Sciatic nerve (tissue), 2 donors: ENCODE measurements at regions of chr2 and their contacts with region 1.

Region 1: GRCh38 chr2:228102949-228103348 is 78.5 kb downstream of the SPHKAP start:
- DNase-seq: no peak
- ATAC-seq: no peak

Region 2: GRCh38 chr2:226548732-226549131 is 1554.2 kb before region 1 on chr2:
- intact Hi-C with region 1: loop called (anchors 10 kb)
- DNase-seq: no peak
- ATAC-seq: no peak

Region 3: DNA sequence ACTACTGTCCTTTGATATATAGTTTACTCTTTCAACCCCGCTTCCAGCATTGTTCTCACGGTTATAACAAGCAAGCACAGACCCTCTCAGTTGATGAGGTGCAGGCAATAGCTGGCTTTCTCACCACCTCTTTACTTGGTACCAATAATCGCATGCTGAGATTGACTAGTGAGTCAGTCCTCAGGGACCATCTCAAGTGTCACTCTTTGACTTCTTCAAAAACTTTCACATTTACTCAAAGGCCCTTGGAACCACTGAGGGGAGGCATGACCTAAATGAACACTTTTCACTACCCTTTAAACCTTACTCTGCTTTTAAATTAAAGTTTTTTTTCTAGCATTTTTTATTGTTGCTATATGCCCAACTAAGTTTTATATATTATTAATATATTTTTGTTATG is 129.7 kb before region 1 on chr2:
- intact Hi-C with region 1: no loop called
- DNase-seq: no peak
- ATAC-seq: no peak

Region 4: DNA sequence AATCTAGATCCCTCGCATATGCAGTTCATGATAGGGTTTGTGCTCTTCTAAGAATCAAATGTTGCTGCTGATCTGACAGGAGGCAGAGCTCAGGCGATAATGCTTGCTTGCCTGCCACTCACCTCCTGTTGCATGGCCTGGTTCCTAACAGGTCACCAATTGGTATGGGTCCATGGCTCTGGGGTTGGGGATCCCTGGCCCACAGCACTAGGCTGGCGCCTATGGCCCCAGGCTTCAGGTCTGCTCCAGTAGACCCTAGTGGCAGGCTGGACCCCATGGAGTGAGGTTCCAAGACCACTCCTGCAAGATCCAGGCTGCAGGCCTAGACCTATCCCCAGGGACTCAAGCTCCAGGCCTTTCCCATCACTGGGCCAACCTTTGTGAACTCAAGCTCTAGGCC is 23.8 kb before region 1 on chr2:
- intact Hi-C with region 1: no loop called
- DNase-seq: no peak
- ATAC-seq: no peak